ENCODE measurements at regions of chr13 and their contacts with region 1.

Region 1: DNA sequence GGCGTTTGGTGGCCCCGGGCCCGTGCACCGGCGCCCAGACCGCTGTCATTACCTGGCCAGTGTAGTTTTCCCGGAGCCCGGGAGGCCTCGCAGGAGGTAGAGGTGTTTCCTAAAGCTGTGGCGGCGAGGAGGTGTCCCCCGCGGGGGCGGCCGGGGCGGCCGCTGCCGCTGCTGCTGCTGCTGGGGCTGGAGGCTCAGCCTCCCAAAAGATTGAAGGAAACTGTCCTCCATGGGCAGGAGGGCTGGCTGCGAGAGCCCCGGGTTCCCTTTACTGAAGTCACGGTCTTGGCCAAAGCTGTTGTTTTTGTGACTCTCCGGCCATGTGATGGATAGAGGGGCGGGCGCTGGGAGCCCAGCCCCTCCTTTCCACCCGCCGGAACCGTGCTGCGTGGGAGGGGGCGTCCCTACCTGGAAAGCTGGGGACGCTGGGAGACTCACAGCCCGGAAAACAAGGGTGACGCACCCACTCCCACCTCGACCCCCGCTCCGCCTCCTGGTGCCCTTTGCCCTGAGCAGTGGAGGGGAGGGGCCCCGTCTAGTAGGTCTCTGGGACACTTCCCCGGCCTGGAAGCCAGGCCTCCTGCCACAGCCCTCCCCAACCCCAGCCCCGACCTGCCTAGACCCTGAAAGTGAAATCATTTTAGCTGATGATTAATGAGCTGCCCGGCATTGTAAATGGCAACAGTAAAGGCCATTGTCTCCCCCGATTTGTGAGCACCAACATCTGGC is at the start of gene N4BP2L1:
- DNase-seq: peak; percentile 78 to 88 (median 84)
- ATAC-seq: peak; percentile 68
- H3K4me3 ChIP-seq: peak within 1 kb of the TSS; percentile 46
- H3K4me1 ChIP-seq: peaks cover 19% of the 10 kb centered on the region
- CTCF ChIP-seq: no peak
- total RNA-seq, gene N4BP2L1: 8.5 to 14.1 (median 11.6) TPM

Region 2: GRCh38 chr13:32315238-32316027 is 112.6 kb before region 1 on chr13 and contains the starts of genes BRCA2 and ZAR1L:
- intact Hi-C with region 1: loop called in 1 of 2 experiments (anchors 10 kb)
- DNase-seq: peak; percentile 92 to 95 (median 93)
- ATAC-seq: peak; percentile 99
- H3K4me3 ChIP-seq: peak within 1 kb of the TSS; percentile 54
- H3K4me1 ChIP-seq: peaks cover 5% of the 10 kb centered on the region
- CTCF ChIP-seq: no peak
- total RNA-seq, gene BRCA2: 1.8 to 4.8 (median 2.5) TPM
- total RNA-seq, gene ZAR1L: not detected